AG04449 (cell line): ENCODE measurements at regions of chr6 and their contacts with region 1.

Region 1: DNA sequence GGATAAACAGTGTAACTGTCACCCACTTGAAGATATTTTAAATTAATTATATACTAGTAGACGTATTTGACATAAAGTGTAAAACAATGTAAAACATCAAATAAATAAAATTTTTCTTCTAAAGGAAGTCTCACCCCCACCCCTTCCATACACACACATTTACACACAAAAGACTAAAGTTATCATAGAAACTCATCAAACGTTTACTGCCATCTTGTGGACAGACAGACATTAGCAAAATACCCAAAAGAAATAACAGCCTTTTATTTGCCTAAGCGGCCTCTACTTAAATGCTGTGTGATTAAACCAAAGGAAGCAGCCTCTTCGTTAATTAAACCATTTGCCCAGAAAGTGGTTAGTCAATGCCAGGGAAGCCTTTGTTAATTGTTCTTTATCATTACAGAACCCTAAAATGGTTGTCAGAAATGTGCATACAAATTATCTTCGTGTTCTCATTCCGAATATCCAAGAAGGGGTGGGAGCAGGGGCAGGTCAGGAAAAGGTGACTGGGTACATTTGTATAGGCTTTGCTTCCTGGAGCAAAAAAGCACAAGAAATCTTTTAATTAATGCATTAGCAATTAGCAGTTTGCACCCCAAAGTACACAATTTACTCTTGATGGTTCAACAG is 176.2 kb upstream of the SASH1 start:
- DNase-seq: peak; percentile 19
- H3K4me3 ChIP-seq: no peak overlapping the region
- CTCF ChIP-seq: peak; percentile 31

Region 2: DNA sequence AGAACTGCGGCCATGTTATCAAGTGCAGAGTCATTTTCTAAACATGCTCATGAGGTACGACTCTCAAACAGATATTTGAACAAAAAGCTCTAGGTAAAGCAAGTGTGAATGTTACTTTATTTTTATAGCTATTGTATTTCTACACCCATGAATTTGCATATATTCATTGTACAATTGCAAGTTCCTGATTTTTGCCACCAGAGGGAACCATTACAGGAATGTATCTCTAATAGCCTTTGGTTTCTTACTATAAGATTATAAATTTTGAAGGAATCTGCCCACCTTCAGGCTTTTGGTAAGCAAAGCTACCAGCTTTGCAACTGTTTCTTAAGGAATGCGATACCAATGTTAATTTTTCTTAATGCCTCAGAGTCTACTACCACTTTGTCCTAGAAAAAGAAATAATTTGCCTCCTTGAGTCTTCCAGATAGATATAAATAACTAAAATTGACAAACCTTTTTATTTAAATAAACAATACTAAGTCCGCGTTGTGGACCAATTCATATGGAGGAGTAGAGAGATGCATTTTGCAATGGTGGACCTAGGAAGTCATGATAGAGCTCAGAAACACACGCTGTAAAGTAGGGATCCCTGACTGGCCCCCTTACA is 783.4 kb before region 1 on chr6:
- CTCF ChIA-PET with region 1: interaction called, 13 read pairs
- POLR2A ChIA-PET with region 1: no interaction called
- DNase-seq: no peak
- H3K4me3 ChIP-seq: no peak overlapping the region
- CTCF ChIP-seq: peak; percentile 29

Region 3: GRCh38 chr6:147390909-147391536 is 775.4 kb before region 1 on chr6:
- CTCF ChIA-PET with region 1: interaction called, 15 read pairs
- POLR2A ChIA-PET with region 1: no interaction called
- DNase-seq: no peak
- H3K4me3 ChIP-seq: no peak overlapping the region
- CTCF ChIP-seq: peak; percentile 23

Region 4: DNA sequence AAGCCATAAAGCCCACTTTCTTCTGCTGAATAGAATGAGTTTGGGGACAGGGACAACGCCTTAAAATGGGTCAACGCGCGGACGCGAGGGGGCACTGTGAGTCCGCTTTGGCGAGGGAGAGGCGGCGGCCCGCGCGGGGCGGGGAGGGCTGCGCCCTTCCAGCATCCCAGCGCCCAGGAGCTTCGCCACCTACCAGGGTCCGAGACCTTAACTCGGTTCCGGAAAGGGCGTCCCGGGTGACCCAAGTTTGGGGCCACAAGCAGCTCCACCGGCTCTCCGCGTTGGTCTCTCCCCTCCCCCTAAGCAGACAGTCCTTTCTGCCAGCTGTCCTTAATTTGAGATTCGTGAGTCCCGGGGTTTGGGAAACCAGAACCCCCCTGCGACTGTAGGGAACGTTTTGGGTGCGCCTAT is 659.7 kb before region 1 on chr6:
- CTCF ChIA-PET with region 1: interaction called, 137 read pairs
- POLR2A ChIA-PET with region 1: no interaction called
- DNase-seq: no peak
- H3K4me3 ChIP-seq: peak overlapping the region; percentile 72
- CTCF ChIP-seq: peak; percentile 87

Region 5: DNA sequence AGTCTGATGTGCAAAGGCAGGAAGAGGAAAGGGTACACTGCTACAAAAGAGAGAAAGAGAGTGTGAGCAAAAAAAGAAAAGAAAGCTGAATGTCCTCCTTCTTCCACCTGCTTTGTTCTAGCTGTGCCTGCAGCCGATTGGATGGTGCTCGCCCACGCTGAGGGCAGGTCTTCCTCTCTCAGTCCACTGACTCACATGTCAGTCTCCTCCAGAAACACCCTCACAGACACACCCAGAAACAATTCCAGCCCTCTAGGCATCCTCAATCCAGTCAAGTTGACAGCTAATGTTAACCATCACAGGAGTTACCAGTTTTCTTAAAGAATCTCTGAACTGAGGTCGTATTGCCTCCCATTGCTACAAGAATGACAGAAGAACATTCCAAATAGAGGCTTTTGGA is 235.7 kb before region 1 on chr6:
- CTCF ChIA-PET with region 1: no interaction called
- POLR2A ChIA-PET with region 1: no interaction called
- DNase-seq: no peak
- H3K4me3 ChIP-seq: no peak overlapping the region
- CTCF ChIP-seq: no peak

Region 6: GRCh38 chr6:148144917-148145521 is 21.4 kb before region 1 on chr6:
- CTCF ChIA-PET with region 1: interaction called, 44 read pairs
- POLR2A ChIA-PET with region 1: no interaction called
- DNase-seq: peak; percentile 4
- H3K4me3 ChIP-seq: no peak overlapping the region
- CTCF ChIP-seq: peak; percentile 72

Region 7: DNA sequence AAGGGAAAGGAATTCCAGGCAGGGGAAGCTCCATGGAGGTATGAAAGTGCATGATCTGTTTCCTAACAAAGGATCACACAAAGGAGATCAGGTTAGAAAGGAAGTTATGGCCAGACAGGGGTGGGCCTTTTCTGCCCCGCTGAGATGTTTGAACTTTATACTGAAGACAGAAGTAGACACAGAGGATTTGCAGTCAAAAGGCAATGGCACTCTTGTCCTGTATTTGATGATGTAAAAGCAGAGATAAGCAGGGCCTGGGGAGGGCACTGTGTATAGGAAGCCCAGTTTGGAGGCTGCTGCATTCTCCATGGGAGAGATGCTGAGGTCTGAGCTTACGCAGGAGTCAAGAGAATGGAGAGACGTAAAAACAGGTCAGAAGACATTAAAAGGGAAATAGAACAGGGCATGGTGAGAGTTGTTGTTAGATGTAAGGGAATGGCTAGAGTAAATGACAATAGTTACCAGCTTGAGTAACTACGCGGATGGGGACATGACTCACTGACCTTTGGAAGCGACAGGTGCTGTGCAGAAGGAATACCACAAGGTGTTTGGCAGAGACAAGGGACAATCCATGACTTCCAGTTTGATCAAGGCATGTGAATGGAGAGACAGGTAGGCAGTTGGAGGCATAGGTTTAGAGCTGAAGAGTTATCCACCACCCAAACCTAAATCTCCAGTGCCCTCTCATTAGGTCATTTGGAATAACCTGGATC is 14.4 kb before region 1 on chr6:
- CTCF ChIA-PET with region 1: interaction called, 44 read pairs
- POLR2A ChIA-PET with region 1: no interaction called
- DNase-seq: no peak
- H3K4me3 ChIP-seq: no peak overlapping the region
- CTCF ChIP-seq: no peak